ENCODE measurements at regions of chr5 and their contacts with region 1.

Region 1: DNA sequence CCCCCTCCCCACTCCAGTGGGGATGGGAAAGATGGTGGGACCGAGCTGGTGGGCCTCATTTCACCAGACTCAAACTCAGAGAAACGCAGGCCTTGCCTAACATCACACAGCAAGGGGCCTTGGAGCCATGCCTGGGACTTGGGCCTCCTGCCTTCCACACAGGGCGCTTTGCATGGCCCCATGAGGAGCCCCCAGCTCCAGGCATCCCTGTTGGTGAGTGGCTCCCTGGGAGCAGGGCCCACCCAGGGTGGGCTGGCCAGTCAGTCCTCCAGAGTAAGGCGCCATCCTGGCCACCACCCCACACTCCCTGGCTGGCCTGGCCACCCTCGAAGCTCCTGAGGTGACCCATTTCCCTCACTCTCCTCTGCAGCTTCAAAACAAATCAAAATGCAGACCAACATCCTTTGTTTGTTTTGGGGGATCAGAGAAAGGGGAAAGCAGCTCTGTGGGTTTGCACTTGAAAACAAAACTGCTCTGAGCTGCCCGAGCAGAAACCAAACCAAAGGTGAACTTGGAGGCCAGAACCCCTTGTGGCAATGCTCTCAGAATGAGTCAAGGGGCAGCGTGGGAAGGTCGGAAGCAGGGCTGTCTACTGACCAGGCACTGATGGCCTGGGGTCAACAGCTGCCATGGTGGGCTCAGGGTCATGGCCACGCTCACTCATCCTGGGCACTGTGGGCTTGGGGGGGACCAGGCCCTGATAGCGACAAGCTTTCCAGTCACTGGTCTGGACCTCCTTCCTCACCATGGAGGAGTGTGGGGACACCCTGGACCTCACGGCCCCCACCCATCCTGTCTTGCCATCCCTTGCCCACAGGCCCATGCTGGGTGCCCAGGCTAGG is 37.0 kb upstream of the VDAC1 start:
- DNase-seq: no peak
- ATAC-seq: no peak
- H3K4me3 Mint-ChIP-seq: no peak overlapping the region
- H3K27ac Mint-ChIP-seq: peak overlapping the region; percentile 31
- H3K4me1 Mint-ChIP-seq: peaks cover 49% of the 10 kb centered on the region
- H3K27me3 Mint-ChIP-seq: no peaks in the 10 kb centered on the region

Region 2: DNA sequence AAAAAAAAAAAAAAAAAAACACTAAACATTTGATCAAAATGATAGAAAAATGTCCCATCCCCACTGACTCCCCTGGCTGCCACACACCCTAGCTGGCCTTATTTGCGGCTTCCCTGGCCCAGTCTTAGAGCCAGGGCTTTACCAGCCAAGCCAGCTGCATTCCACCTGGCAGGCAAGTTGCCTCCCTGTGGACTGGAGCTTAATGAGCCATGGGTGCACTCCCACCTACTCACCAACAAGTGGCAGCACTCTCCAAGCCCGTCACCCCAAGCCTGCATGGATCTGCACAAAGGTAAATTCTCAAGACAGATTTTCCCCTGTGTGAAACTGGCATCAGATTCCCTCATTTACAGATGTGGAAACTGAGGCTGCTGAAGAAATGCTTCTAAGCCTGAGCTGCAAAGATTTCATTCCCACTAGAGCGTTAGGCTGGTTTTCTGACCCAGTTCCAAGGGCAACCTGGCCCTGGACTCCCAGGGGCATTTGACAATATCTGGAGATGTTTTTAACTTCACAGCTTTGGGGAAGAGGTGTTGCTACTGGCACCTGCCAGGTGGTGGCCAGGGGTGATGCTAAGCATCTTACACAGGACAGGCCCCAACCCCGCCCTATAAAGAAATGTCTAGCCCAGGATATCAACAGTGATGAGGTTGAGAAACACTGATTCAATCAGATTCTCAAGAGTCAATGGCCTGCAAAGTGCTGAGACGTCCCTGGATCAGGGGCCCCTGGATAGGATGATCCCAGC is 15.1 kb before region 1 on chr5:
- CTCF ChIA-PET with region 1: interaction called, 35 read pairs
- POLR2A ChIA-PET with region 1: no interaction called
- intact Hi-C with region 1: no loop called
- DNase-seq: peak; percentile 75
- ATAC-seq: peak; percentile 99
- H3K4me3 Mint-ChIP-seq: no peak overlapping the region
- H3K27ac Mint-ChIP-seq: no peak overlapping the region
- H3K4me1 Mint-ChIP-seq: no peaks in the 10 kb centered on the region
- H3K27me3 Mint-ChIP-seq: no peaks in the 10 kb centered on the region

Region 3: DNA sequence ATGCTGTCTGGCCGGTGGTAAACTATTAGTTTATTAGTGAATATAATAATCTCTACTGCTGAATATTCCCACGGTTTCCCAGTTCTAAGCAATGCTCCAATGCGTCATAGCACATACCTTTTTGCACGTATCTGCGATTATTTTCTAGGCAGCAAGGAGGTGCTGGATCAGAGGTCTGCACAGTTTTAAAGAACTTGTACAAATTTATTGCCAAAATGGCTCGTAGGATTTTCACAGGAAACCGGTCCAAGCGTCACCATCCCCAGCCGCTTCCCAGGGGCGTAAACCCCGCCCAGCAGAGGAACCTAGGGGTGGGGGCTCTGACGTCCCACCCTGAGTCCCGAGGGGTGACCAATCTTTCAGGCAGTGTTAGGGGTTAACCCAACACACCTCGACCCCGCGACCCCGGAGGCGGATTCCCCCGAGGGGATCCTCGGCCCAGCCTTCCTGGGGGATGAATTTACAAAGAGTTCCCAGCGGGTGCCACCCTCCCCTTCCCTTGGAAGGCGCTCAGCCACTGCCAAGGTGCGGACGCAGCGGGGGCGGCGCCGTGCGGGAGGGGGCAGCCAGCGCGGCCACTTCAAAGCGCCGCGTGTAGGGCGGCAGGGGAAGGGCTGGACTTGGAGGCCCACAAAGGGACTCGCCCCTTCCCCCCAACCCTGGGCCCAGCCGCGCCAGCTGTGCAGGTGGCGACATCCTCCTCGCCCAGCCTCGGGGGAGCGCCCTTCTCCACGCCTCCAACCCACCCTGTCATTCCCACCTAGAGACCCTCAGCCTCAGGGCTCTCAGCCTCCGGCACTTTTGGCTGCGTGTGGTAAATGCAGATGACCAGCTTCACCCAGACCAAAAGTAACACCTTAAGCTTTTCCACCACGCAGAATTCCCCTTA is 29.2 kb after region 1 on chr5:
- CTCF ChIA-PET with region 1: interaction called, 30 read pairs
- POLR2A ChIA-PET with region 1: no interaction called
- intact Hi-C with region 1: loop called (anchors 1 to 2 kb)
- DNase-seq: peak; percentile 77
- ATAC-seq: peak; percentile 1
- H3K4me3 Mint-ChIP-seq: peak overlapping the region; percentile 73
- H3K27ac Mint-ChIP-seq: peak overlapping the region; percentile 89
- H3K4me1 Mint-ChIP-seq: peaks cover 68% of the 10 kb centered on the region
- H3K27me3 Mint-ChIP-seq: no peaks in the 10 kb centered on the region

Region 4: GRCh38 chr5:134125039-134126015 is 83.5 kb after region 1 on chr5:
- CTCF ChIA-PET with region 1: interaction called, 109 read pairs
- POLR2A ChIA-PET with region 1: no interaction called
- intact Hi-C with region 1: no loop called
- DNase-seq: peak; percentile 54
- ATAC-seq: no peak
- H3K4me3 Mint-ChIP-seq: peak overlapping the region; percentile 52
- H3K27ac Mint-ChIP-seq: peak overlapping the region; percentile 91
- H3K4me1 Mint-ChIP-seq: peaks cover 100% of the 10 kb centered on the region
- H3K27me3 Mint-ChIP-seq: no peaks in the 10 kb centered on the region

Region 5: DNA sequence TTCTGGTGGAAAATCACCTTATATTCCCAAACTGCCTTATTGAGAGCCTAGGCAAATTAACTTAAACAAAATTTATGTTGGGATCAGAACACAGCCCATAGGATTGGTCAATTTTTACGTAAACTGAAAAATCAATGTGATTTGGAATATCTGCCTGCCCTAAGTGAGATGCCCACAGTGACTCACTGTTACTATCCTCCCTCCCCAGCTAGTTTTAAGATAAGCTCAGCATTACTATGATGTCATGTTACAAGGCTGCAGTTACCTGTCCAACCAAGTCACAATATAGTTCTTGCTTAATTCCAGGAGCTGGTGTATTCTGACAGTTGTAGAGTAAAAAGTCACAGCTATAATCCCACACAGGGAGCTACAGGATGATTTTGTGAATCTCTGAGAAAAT is 111.9 kb after region 1 on chr5:
- CTCF ChIA-PET with region 1: interaction called, 554 read pairs
- POLR2A ChIA-PET with region 1: interaction called, 3 read pairs
- intact Hi-C with region 1: no loop called
- DNase-seq: no peak
- ATAC-seq: peak; percentile 55
- H3K4me3 Mint-ChIP-seq: no peak overlapping the region
- H3K27ac Mint-ChIP-seq: peak overlapping the region; percentile 69
- H3K4me1 Mint-ChIP-seq: peaks cover 70% of the 10 kb centered on the region
- H3K27me3 Mint-ChIP-seq: no peaks in the 10 kb centered on the region

Region 6: DNA sequence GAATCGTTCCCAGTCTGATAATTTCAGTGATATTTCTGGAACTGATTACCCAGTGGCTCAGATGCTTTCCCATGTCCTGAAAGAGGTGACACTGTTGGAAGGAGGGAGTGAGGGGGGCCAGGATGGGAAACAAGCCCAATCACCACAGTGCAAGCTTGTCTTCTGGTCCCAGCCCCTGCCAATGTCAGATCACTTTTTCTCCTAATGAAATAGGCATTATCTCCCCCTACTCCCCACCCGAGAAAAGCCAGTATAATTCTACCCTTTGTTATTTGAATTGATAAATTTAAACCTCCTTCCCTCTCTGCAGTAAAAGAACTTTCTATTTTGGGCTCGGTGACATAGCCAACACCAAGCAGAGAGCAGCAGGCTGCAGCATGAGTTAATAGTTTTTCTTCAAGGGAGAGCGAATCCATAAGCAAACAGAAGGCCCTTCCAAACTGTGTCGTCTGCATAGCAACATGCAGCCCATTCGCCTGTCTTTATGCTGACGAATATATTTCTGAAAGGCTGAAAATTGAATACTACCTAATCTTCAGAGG is 198.7 kb after region 1 on chr5:
- CTCF ChIA-PET with region 1: no interaction called
- POLR2A ChIA-PET with region 1: no interaction called
- intact Hi-C with region 1: no loop called
- DNase-seq: no peak
- ATAC-seq: no peak
- H3K4me3 Mint-ChIP-seq: no peak overlapping the region
- H3K27ac Mint-ChIP-seq: no peak overlapping the region
- H3K4me1 Mint-ChIP-seq: no peaks in the 10 kb centered on the region
- H3K27me3 Mint-ChIP-seq: no peaks in the 10 kb centered on the region

Region 7: DNA sequence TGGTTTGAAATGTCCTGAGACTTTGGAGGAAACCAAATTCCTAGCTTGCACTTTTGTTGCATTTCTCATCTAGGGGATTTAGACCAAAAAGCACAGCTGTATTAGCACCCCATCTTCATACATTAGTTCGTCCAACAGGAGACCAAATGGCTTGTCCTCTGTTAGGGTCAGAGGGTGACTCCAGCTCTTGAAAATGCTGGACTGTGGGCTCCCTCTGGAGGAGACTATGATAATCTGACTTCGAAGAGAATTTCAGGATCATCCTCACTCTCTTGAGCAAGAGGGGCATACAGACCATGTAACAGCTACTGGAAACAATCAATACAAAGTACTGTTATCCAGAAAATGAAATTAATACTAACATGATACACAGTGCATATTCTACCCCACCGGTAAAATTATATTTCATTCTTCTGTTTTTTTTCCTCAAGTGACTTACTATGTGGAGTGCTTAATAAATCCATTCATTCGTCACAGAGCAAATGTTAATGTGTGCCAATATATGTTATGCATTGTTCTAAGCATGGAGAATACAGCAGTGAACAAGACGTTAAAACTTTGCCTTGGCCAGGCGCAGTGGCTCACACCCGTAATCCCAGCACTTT is 247.8 kb after region 1 on chr5:
- CTCF ChIA-PET with region 1: interaction called, 3 read pairs
- POLR2A ChIA-PET with region 1: no interaction called
- intact Hi-C with region 1: loop called (anchors 1 to 5 kb)
- DNase-seq: peak; percentile 57
- ATAC-seq: peak; percentile 70
- H3K4me3 Mint-ChIP-seq: no peak overlapping the region
- H3K27ac Mint-ChIP-seq: no peak overlapping the region
- H3K4me1 Mint-ChIP-seq: peaks cover 4% of the 10 kb centered on the region
- H3K27me3 Mint-ChIP-seq: no peaks in the 10 kb centered on the region

Region 8: GRCh38 chr5:134374232-134374631 is 332.4 kb after region 1 on chr5:
- CTCF ChIA-PET with region 1: no interaction called
- POLR2A ChIA-PET with region 1: no interaction called
- intact Hi-C with region 1: no loop called
- DNase-seq: peak; percentile 31
- ATAC-seq: no peak
- H3K4me3 Mint-ChIP-seq: no peak overlapping the region
- H3K27ac Mint-ChIP-seq: peak overlapping the region; percentile 25
- H3K4me1 Mint-ChIP-seq: peaks cover 49% of the 10 kb centered on the region
- H3K27me3 Mint-ChIP-seq: no peaks in the 10 kb centered on the region

Measured in activated CD4-positive, alpha-beta T cell treated with anti-CD3 and anti-CD28 coated beads for 36 hours (primary cell).